ENCODE measurements at regions of chr22 and their contacts with region 1.

Region 1: GRCh38 chr22:32473388-32473952 is 1.1 kb upstream of the FBXO7 start:
- DNase-seq: peak; percentile 63
- H3K4me3 Mint-ChIP-seq: peak overlapping the region; percentile 76
- H3K27ac Mint-ChIP-seq: no peak overlapping the region
- H3K4me1 Mint-ChIP-seq: peaks cover 14% of the 10 kb centered on the region
- H3K27me3 Mint-ChIP-seq: no peaks in the 10 kb centered on the region
- CTCF ChIP-seq: peak; percentile 62

Region 2: DNA sequence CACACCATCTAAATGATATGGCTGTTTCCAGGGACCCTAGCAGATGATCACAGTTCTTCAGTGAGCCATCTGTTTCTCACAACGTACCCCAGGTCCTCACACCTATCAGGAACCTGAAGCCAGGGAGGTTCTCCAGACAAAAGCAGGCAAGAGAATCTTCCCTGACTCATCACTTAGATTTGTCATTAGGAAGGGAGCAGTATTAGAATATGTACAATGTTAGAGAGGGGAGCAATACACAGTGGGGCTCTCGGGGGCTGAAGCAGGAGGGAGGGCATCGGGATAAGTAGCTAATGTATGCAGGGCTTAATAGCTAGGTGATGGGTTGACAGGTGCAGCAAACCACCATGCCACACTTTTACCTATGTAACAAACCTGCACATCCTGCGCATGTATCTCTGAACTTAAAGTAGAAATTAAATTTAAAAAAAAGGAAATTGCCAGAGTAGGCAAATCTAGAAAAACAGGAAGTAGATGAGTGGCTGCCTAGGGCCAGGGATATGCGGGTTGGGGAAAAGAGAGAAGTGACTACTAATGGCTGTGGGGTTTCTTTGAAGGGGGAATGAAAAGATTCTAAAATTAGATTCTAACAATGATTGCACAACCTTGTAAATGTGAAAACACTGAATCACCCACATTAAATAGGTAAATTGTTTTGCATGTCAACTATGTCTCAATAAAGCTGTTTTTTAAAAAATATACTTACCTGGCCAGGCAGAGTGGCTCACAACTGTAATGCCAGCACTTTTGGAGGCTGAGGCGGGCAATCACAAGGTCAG is 328.8 kb before region 1 on chr22:
- CTCF ChIA-PET with region 1: no interaction called
- intact Hi-C with region 1: no loop called
- DNase-seq: no peak
- H3K4me3 Mint-ChIP-seq: no peak overlapping the region
- H3K27ac Mint-ChIP-seq: no peak overlapping the region
- H3K4me1 Mint-ChIP-seq: no peaks in the 10 kb centered on the region
- H3K27me3 Mint-ChIP-seq: peaks cover 50% of the 10 kb centered on the region
- CTCF ChIP-seq: no peak

Region 3: DNA sequence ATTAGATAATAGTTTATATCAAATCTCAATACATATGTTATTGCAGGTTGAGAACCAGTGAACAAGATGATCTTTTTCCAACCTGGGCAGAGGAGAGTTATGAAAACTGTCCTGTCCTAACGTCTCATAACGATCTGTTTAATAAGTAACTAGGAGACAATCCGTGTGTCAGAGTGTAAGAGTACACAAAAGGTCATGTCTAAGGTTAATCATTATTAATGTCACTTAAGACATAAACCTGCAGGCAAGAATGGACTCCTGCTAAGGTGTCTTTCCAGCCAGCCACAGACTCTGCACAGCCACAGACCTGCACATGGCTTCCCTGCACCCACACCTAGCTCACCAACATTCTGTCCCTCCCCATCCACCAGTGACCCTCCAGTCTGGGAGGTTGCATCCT is 228.4 kb before region 1 on chr22:
- CTCF ChIA-PET with region 1: no interaction called
- intact Hi-C with region 1: no loop called
- DNase-seq: no peak
- H3K4me3 Mint-ChIP-seq: no peak overlapping the region
- H3K27ac Mint-ChIP-seq: no peak overlapping the region
- H3K4me1 Mint-ChIP-seq: peaks cover 18% of the 10 kb centered on the region
- H3K27me3 Mint-ChIP-seq: peaks cover 24% of the 10 kb centered on the region
- CTCF ChIP-seq: no peak

Region 4: DNA sequence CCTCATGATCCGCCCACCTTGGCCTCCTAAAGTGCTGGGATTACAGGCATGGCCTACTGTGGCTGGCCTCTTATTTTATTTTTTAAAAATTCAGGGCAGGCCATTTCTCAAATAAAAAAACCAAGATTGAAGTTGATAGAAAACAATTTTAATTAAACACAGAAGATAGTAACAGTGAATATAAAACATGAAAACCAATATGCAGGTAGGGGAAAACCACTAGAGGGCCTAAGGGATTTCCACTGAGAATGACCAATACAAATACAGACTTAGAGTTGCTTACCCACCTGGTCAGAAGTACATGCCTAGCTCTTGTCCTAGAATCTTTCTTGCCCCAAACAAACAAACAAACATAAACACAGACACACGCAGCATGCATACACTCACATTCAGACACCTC is 59.8 kb before region 1 on chr22:
- CTCF ChIA-PET with region 1: interaction called, 5 read pairs
- intact Hi-C with region 1: loop called (anchors 1 kb)
- DNase-seq: no peak
- H3K4me3 Mint-ChIP-seq: no peak overlapping the region
- H3K27ac Mint-ChIP-seq: no peak overlapping the region
- H3K4me1 Mint-ChIP-seq: peaks cover 13% of the 10 kb centered on the region
- H3K27me3 Mint-ChIP-seq: peaks cover 38% of the 10 kb centered on the region
- CTCF ChIP-seq: no peak